Left cardiac atrium (tissue), 4 donors: ENCODE measurements at regions of chr3 and their contacts with region 1.

Region 1: DNA sequence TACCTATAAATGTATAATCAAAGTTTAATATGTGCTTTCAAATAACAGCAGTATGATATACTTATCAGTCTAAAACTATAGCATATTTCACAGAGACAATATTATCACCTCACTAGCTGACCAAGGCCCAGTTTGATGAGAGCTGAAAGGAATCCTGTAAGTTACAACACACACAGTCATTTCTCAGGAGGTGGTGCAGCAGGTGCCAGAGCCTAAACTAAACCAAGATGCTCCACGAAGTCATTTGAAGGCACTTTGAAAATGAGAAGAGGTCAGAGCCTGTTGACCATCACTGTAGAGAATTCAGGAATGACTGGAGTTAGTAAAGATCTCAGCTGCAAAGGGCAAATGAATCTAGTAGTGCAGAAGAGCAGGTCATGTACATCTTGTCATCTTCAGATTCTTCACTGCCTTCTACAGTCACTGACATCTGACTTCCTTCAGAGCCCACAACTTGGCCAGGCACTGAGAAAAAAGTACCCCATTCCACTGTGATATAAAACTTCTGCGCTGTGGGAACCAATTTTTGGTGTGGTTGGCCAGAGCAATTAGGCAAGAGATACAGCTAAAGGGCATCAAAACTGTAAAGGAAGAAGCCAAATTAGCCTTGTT is 7.9 kb downstream of the GBE1 start:
- DNase-seq: no peak
- ATAC-seq: no peak

Region 2: GRCh38 chr3:81674690-81675089 is 78.8 kb before region 1 on chr3:
- intact Hi-C with region 1: loop called in 1 of 2 experiments (anchors 5 kb)
- DNase-seq: no peak
- ATAC-seq: no peak